ENCODE measurements at regions of chr3 and their contacts with region 1.

Region 1: GRCh38 chr3:59049671-59050331 is at the start of gene CFAP20DC:
- DNase-seq: peak; percentile 89
- ATAC-seq: peak; percentile 100
- H3K4me3 ChIP-seq: peak within 1 kb of the TSS; percentile 88
- H3K27ac ChIP-seq: peak within 1 kb of the TSS; percentile 81
- H3K4me1 ChIP-seq: 0 out of 2 replicates have a peak, but pooled peaks cover 2% of the 10 kb centered on the region
- H3K27me3 ChIP-seq: no peaks in the 10 kb centered on the region
- CTCF ChIP-seq: no peak
- POLR2A ChIP-seq: peak; percentile 85
- RAD21 ChIP-seq: no peak
- total RNA-seq, gene CFAP20DC: 1.6 and 2.8 TPM in 2 replicates

Region 2: GRCh38 chr3:58161435-58162398 is 888.1 kb before region 1 on chr3:
- CTCF ChIA-PET with region 1: no interaction called
- POLR2A ChIA-PET with region 1: no interaction called
- dilution Hi-C with region 1: no loop called
- in situ Hi-C with region 1: no loop called
- intact Hi-C with region 1: no loop called
- DNase-seq: peak; percentile 98
- ATAC-seq: peak; percentile 47
- H3K4me3 ChIP-seq: no peak overlapping the region
- H3K27ac ChIP-seq: peak overlapping the region; percentile 3; the same call in 1 of the 2 replicates
- H3K4me1 ChIP-seq: peaks cover 25% of the 10 kb centered on the region
- H3K27me3 ChIP-seq: no peaks in the 10 kb centered on the region
- CTCF ChIP-seq: no peak
- POLR2A ChIP-seq: no peak
- RAD21 ChIP-seq: no peak

Region 3: DNA sequence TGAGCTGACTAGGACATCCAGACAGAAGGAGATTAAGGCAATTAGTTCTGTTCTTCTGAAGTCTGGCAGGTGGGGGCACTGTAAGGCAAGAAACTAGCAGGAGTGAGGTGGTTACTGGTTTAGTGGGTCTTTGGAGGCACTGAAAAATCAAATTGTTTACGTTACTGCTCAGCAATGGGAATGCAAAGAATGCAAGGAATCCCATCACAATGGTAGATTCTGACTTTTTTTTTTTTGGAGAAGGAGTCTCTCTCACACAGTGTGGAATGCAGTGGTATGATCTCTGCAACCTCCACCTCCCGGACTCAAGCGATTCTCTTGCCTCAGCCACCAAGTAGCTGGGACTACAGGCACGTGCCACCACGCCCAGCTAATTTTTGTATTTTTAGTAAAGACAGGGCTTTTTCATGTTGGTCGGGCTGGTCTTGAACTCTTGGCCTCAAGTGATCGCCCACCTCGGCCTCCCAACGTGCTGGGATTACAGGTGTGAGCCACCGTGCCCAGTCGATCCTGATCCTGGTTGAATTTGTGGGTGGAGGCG is 489.0 kb before region 1 on chr3:
- CTCF ChIA-PET with region 1: interaction called, 4 read pairs
- POLR2A ChIA-PET with region 1: no interaction called
- dilution Hi-C with region 1: no loop called
- in situ Hi-C with region 1: no loop called
- intact Hi-C with region 1: loop called (anchors 2 kb)
- DNase-seq: peak; percentile 98
- ATAC-seq: peak; percentile 91
- H3K4me3 ChIP-seq: no peak overlapping the region
- H3K27ac ChIP-seq: peak overlapping the region; percentile 81
- H3K4me1 ChIP-seq: peaks cover 4% of the 10 kb centered on the region; the same call in 1 of the 2 replicates
- H3K27me3 ChIP-seq: no peaks in the 10 kb centered on the region
- CTCF ChIP-seq: peak; percentile 88
- POLR2A ChIP-seq: no peak; the same call in 1 of the 2 replicates
- RAD21 ChIP-seq: peak; percentile 90

Region 4: GRCh38 chr3:58585005-58585786 is 464.6 kb before region 1 on chr3:
- CTCF ChIA-PET with region 1: no interaction called
- POLR2A ChIA-PET with region 1: no interaction called
- dilution Hi-C with region 1: no loop called
- in situ Hi-C with region 1: no loop called
- intact Hi-C with region 1: no loop called
- DNase-seq: peak; percentile 58
- ATAC-seq: peak; percentile 98
- H3K4me3 ChIP-seq: peak overlapping the region; percentile 58
- H3K27ac ChIP-seq: no peak overlapping the region
- H3K4me1 ChIP-seq: no peaks in the 10 kb centered on the region
- H3K27me3 ChIP-seq: peaks cover 30% of the 10 kb centered on the region
- CTCF ChIP-seq: peak; percentile 66
- POLR2A ChIP-seq: no peak
- RAD21 ChIP-seq: peak; percentile 40

Region 5: DNA sequence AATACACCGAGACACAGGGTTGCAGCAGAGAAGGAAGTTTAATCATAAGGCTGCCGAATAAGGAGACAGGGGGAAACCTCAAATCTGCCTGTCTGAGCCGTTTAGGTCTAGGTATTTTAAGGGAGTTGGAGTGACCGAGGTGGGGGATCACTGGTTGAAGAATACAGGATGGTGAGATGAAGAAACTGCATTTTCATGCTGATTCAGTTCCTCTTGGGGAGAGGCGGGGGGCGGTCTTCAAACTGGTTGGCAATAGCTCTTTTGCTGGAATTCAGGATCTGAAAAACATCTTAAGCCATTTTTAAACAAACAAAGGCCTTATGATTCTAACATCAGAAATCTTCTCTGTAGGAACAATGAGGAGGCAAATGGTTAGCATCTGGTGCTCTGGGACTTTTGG is 699.5 kb after region 1 on chr3:
- CTCF ChIA-PET with region 1: no interaction called
- POLR2A ChIA-PET with region 1: no interaction called
- dilution Hi-C with region 1: no loop called
- in situ Hi-C with region 1: no loop called
- intact Hi-C with region 1: no loop called
- DNase-seq: peak; percentile 79
- ATAC-seq: peak; percentile 79
- H3K4me3 ChIP-seq: no peak overlapping the region
- H3K27ac ChIP-seq: peak overlapping the region; percentile 84; the same call in 1 of the 2 replicates
- H3K4me1 ChIP-seq: peaks cover 17% of the 10 kb centered on the region
- H3K27me3 ChIP-seq: no peaks in the 10 kb centered on the region
- CTCF ChIP-seq: no peak
- POLR2A ChIP-seq: no peak
- RAD21 ChIP-seq: no peak